CD4-positive, alpha-beta memory T cell (primary cell): ENCODE measurements at regions of chr13 and their contacts with region 1.

Region 1: DNA sequence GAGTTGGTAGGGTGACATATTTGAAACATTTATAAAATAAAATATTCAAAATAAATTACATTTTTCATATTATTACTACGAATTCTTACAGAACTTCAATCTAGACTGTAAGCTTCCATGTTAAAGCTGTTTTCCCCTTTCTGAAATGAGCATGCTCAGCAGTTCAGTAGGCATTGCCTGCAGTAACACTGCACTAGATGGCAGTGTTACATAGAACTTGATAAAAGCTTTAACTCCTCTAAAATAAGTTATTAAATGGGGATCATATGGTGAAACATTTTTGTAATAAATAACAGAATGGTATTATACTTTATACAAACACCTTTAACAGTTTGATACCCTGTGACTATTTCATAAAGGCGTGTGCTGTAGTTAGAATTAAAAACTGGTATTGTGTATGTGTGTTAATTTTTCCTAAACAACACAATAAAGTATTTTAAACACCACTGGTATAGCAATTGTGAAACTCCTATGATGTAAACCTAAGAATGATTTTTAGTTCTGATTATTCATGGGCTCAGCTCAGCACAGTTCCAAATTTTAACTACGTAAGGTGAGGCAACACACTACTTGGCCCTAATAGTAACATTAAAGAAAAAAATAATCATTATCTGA is 11.6 kb upstream of the GPR18 start:
- DNase-seq: peak; percentile 57 to 71 (median 63)
- H3K4me3 ChIP-seq: no peak overlapping the region
- H3K4me3 Mint-ChIP-seq: peak overlapping the region in 2 of 8 donors; percentile 53 to 67
- H3K27ac ChIP-seq: peak overlapping the region; percentile 42
- H3K27ac Mint-ChIP-seq: peak overlapping the region; percentile 23 to 98 (median 92)
- H3K4me1 ChIP-seq: peaks cover 59% of the 10 kb centered on the region
- H3K4me1 Mint-ChIP-seq: peaks cover 43 to 72% (median 58%) of the 10 kb centered on the region in 4 donors
- H3K27me3 ChIP-seq: no peaks in the 10 kb centered on the region
- H3K27me3 Mint-ChIP-seq: no peaks in the 10 kb centered on the region

Region 2: GRCh38 chr13:99214232-99214631 is 55.5 kb before region 1 on chr13:
- CTCF ChIA-PET with region 1: interaction called, 325 read pairs
- POLR2A ChIA-PET with region 1: interaction called, 13 read pairs
- intact Hi-C with region 1: no loop called
- DNase-seq: peak in 1 of 5 donors; percentile 61
- H3K4me3 ChIP-seq: peak overlapping the region in 1 of 2 donors; percentile 62
- H3K4me3 Mint-ChIP-seq: peak overlapping the region; percentile 73 to 97 (median 94)
- H3K27ac ChIP-seq: peak overlapping the region; percentile 68
- H3K27ac Mint-ChIP-seq: peak overlapping the region; percentile 96 to 99 (median 99)
- H3K4me1 ChIP-seq: peaks cover 78% of the 10 kb centered on the region
- H3K4me1 Mint-ChIP-seq: peaks cover 55 to 92% (median 74%) of the 10 kb centered on the region in 4 donors
- H3K27me3 ChIP-seq: no peaks in the 10 kb centered on the region
- H3K27me3 Mint-ChIP-seq: no peaks in the 10 kb centered on the region

Region 3: GRCh38 chr13:99281811-99282263 is 12.1 kb after region 1 on chr13:
- CTCF ChIA-PET with region 1: interaction called, 139 read pairs
- POLR2A ChIA-PET with region 1: interaction called, 74 read pairs
- intact Hi-C with region 1: loop called (anchors 1 kb)
- DNase-seq: peak; percentile 65 to 79 (median 74)
- H3K4me3 ChIP-seq: peak overlapping the region in 1 of 2 donors; percentile 16
- H3K4me3 Mint-ChIP-seq: peak overlapping the region; percentile 67 to 92 (median 82)
- H3K27ac ChIP-seq: peak overlapping the region; percentile 66
- H3K27ac Mint-ChIP-seq: peak overlapping the region; percentile 88 to 100 (median 99)
- H3K4me1 ChIP-seq: peaks cover 96% of the 10 kb centered on the region
- H3K4me1 Mint-ChIP-seq: peaks cover 77 to 99% (median 88%) of the 10 kb centered on the region in 4 donors
- H3K27me3 ChIP-seq: no peaks in the 10 kb centered on the region
- H3K27me3 Mint-ChIP-seq: no peaks in the 10 kb centered on the region

Region 4: DNA sequence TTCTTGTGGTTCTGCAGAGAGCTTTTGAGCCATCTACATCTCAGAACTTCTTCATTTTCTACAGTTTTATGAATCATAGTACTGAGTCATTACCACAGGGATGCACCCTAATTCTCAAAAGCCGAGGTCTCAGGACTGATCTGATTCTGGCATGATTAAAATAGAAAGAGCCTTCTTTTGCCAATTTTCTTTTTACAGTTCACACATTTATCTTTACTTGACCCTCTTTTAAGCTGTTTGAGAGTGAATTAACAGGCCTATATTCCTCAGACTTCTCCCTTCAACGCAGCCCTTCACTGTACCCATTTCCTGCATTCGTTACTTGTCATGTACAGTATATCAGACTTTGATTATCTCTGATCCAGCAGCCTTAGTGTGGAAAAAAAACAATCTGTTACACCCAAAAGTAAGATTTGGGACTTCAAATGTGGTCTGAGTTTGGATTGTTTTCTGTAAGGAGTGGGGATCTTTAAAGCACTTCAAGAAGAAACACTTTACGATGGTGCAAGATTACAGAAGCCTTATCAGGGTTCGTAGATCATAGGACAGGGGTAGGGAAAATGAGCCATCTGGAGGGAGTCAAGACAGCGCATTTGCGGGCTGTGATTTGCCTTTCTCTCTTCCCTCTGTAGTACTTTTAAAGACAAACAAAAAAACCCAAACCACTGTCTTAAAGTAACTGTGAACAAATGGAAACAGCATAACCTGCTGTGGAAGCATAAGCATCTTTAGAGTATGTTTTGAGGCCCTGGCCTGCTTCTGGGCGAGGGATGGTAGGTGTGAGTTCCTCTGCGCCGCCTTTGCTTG is 52.8 kb after region 1 on chr13:
- CTCF ChIA-PET with region 1: interaction called, 10 read pairs
- POLR2A ChIA-PET with region 1: interaction called, 4 read pairs
- intact Hi-C with region 1: no loop called
- DNase-seq: peak; percentile 63 to 72 (median 68)
- H3K4me3 ChIP-seq: peak overlapping the region in 1 of 2 donors; percentile 5
- H3K4me3 Mint-ChIP-seq: peak overlapping the region; percentile 20 to 82 (median 68)
- H3K27ac ChIP-seq: peak overlapping the region; percentile 79
- H3K27ac Mint-ChIP-seq: peak overlapping the region; percentile 91 to 99 (median 94)
- H3K4me1 ChIP-seq: peaks cover 87% of the 10 kb centered on the region
- H3K4me1 Mint-ChIP-seq: peaks cover 54 to 84% (median 69%) of the 10 kb centered on the region in 4 donors
- H3K27me3 ChIP-seq: no peaks in the 10 kb centered on the region
- H3K27me3 Mint-ChIP-seq: no peaks in the 10 kb centered on the region

Region 5: GRCh38 chr13:99374994-99375737 is 105.4 kb after region 1 on chr13:
- CTCF ChIA-PET with region 1: interaction called, 315 read pairs
- POLR2A ChIA-PET with region 1: interaction called, 5 read pairs
- intact Hi-C with region 1: no loop called
- DNase-seq: peak; percentile 73 to 89 (median 82)
- H3K4me3 ChIP-seq: peak overlapping the region in 1 of 2 donors; percentile 15
- H3K4me3 Mint-ChIP-seq: peak overlapping the region; percentile 61 to 77 (median 68)
- H3K27ac ChIP-seq: peak overlapping the region; percentile 39
- H3K27ac Mint-ChIP-seq: peak overlapping the region; percentile 96 to 100 (median 98)
- H3K4me1 ChIP-seq: peaks cover 85% of the 10 kb centered on the region
- H3K4me1 Mint-ChIP-seq: peaks cover 58 to 95% (median 79%) of the 10 kb centered on the region in 4 donors
- H3K27me3 ChIP-seq: no peaks in the 10 kb centered on the region
- H3K27me3 Mint-ChIP-seq: no peaks in the 10 kb centered on the region

Region 6: GRCh38 chr13:99448546-99448945 is 178.8 kb after region 1 on chr13:
- CTCF ChIA-PET with region 1: interaction called, 564 read pairs
- POLR2A ChIA-PET with region 1: no interaction called
- intact Hi-C with region 1: no loop called
- DNase-seq: no peak
- H3K4me3 ChIP-seq: no peak overlapping the region
- H3K4me3 Mint-ChIP-seq: no peak overlapping the region
- H3K27ac ChIP-seq: no peak overlapping the region
- H3K27ac Mint-ChIP-seq: no peak overlapping the region
- H3K4me1 ChIP-seq: no peaks in the 10 kb centered on the region
- H3K4me1 Mint-ChIP-seq: peaks cover 0 to 2% (median 0%) of the 10 kb centered on the region in 4 donors
- H3K27me3 ChIP-seq: no peaks in the 10 kb centered on the region
- H3K27me3 Mint-ChIP-seq: peaks cover 2 to 10% of the 10 kb centered on the region in 2 donors